GM12878 (cell line): ENCODE measurements at regions of chr12 and their contacts with region 1.

Region 1: DNA sequence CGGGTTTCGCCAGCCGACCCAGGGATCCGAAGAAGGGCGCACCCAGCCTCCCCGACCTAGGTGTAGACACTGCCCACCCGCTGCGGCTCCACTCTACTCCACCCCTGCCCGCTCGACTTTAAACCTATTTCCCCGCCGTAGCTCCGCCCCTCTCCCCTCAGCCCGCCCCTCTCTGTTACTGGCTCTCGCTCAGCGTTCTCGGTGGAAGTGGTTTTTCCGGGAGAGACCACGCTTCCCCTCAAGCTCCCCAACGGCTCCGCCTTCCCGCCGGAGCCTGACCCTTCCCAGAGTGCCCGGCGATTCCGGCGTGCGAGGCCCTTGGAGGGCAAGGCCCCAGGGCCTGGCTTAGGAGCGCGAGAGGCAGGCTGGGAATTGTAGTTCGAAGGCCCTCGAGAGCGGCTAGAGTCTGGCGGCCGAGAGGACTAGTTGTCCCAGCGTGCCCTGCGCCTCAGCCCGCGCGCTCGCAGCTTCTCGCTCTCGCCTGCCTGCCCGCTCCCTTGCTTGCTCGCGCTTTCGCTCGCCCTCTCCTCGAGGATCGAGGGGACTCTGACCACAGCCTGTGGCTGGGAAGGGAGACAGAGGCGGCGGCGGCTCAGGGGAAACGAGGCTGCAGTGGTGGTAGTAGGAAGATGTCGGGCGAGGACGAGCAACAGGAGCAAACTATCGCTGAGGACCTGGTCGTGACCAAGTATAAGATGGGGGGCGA is at the start of gene PA2G4:
- DNase-seq: peak; percentile 97
- ATAC-seq: peak; percentile 97
- H3K4me3 ChIP-seq: peak within 1 kb of the TSS; percentile 97
- H3K27ac ChIP-seq: peak within 1 kb of the TSS; percentile 86
- H3K4me1 ChIP-seq: peaks cover 3% of the 10 kb centered on the region; the same call in 1 of the 2 replicates
- H3K27me3 ChIP-seq: no peaks in the 10 kb centered on the region; a peak in 1 of 4 replicates
- CTCF ChIP-seq: no peak
- EP300 ChIP-seq: peak in 1 of 2 experiments; percentile 47; a peak in 2 of 4 replicates
- POLR2A ChIP-seq: peak; percentile 93
- RAD21 ChIP-seq: no peak
- polyA plus RNA-seq, gene PA2G4: 148 to 215 TPM

Region 2: DNA sequence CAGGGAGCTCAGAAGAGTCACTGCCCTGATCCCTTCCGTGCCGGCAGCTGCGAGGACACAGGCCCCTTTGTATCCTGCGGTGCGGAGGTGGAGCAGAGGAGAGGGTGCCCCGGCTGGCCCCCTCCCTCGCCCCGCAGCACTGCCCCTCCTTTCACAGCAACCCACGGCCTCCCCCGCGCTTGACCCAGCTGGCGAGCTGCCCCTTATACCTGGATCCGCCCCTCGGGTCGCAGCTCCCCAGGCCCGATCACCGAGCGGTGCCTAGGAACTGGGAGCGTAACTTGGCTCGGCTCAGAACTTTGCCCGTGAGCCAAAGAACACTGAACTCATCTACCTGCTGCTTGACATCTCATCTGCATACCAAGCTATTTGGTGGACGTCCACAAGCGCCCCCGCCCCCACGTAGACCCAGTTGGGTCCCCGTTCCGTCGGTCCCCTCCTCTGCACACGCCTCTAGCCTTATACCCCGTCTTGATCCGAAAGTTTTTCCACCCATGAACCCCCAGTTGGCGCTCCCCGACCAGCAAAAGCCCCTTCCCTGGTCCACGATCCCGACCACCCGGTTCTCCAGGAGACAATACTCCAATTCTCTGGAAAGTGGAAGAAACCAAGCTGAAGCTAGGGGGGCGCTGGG is 274.2 kb before region 1 on chr12:
- CTCF ChIA-PET with region 1: no interaction called
- POLR2A ChIA-PET with region 1: interaction called, 3 read pairs
- RAD21 ChIA-PET with region 1: interaction called, 4 read pairs
- SMC1A ChIA-PET with region 1: interaction called, 3 read pairs
- in situ Hi-C with region 1: no loop called
- intact Hi-C with region 1: loop called (anchors 5 kb)
- DNase-seq: no peak
- ATAC-seq: peak; percentile 25
- H3K4me3 ChIP-seq: peak overlapping the region; percentile 96
- H3K27ac ChIP-seq: peak overlapping the region; percentile 76
- H3K4me1 ChIP-seq: peaks cover 21% of the 10 kb centered on the region; the same call in 1 of the 2 replicates
- H3K27me3 ChIP-seq: no peaks in the 10 kb centered on the region
- CTCF ChIP-seq: no peak
- EP300 ChIP-seq: no peak
- POLR2A ChIP-seq: 0 out of 2 replicates have a peak, but pooled peaks have one; percentile 20
- RAD21 ChIP-seq: 0 out of 2 replicates have a peak, but pooled peaks have one; percentile 13

Region 3: DNA sequence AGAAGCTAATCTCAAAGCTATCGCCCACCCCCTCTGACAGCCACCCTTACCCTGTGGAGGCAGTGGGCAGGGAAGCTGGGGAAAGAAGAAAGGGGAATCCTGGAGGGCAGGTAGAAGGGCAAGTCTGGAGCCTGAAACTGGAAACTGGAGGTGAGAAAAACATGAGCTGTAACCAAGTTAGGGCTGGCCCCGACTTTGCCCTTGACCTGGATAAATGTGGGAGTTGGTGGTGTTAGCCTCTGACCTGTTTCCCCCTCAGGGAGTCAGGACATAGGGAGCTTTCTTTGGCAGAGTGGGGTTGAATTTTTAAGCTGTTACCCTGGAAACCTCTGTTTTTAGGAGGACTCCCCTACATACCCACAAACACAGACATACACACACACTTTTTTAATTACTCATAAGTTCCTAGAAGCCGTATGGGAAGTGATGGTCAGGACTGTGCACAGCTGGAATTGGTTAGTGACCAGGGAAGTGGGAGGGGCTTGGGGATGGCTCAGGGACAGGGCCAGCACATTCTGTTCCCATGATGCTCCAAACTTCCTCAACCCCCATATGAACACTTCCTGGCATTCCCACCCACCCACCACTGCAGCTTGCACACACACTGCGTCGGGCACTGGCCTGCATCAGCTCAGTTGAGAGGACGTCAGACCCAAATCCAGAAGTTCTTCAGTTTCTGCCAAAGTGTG is 256.5 kb before region 1 on chr12:
- CTCF ChIA-PET with region 1: no interaction called
- POLR2A ChIA-PET with region 1: no interaction called
- RAD21 ChIA-PET with region 1: no interaction called
- SMC1A ChIA-PET with region 1: no interaction called
- in situ Hi-C with region 1: no loop called
- intact Hi-C with region 1: no loop called
- DNase-seq: no peak
- ATAC-seq: peak; percentile 36
- H3K4me3 ChIP-seq: no peak overlapping the region
- H3K27ac ChIP-seq: no peak overlapping the region
- H3K4me1 ChIP-seq: no peaks in the 10 kb centered on the region; the same call in 1 of the 2 replicates
- H3K27me3 ChIP-seq: peaks cover 0 to 1% of the 10 kb centered on the region in 2 experiments; a peak in 3 of 4 replicates
- CTCF ChIP-seq: no peak
- EP300 ChIP-seq: no peak
- POLR2A ChIP-seq: no peak
- RAD21 ChIP-seq: no peak

Region 4: DNA sequence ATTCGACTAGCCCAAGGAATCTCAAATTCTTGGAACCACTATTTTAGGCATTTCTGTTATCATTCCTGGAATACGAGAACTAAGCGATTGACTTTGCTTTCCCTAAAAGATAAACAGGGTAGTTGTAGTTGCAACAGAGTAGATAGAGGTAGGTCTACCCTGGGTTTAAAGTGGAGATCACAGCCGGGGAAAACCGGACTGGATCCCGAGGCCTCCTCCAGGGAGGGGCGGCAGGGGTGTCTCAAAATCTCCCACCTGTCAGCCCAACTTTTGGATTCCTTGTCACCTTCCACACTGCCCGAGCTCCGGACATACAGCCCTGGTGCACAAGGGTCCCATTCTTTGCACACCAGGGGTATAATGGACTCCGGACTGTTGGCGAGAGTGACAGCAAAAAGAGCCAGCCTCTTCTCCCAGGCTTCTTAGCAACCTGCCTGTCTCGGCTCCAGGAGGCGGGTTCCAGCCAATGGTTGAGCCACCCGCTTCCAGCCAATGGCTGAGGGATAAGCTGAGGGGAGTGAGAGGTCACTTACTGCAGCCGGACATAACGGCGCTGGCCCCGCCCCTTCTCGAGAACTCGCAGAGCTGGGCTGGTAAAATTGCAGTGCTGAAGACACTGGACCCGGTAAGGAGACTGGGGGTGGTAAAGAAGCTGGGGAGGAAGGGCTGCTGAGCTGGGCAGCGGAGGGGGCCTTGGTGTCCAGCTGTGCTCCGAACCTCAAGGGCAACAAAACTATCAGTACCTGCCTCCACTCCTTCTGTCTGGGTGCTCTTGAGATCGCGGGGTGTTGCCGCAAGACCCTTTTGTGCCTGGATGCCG is 107.3 kb before region 1 on chr12 and contains the start of gene SUOX:
- CTCF ChIA-PET with region 1: interaction called, 15 read pairs
- POLR2A ChIA-PET with region 1: no interaction called
- RAD21 ChIA-PET with region 1: interaction called, 14 read pairs
- SMC1A ChIA-PET with region 1: interaction called, 3 read pairs
- in situ Hi-C with region 1: no loop called
- intact Hi-C with region 1: no loop called
- DNase-seq: peak; percentile 83
- ATAC-seq: peak; percentile 100
- H3K4me3 ChIP-seq: peak within 1 kb of the TSS; percentile 74
- H3K27ac ChIP-seq: peak within 1 kb of the TSS; percentile 33; the same call in 1 of the 2 replicates
- H3K4me1 ChIP-seq: peaks cover 3% of the 10 kb centered on the region; the same call in 1 of the 2 replicates
- H3K27me3 ChIP-seq: no peaks in the 10 kb centered on the region
- CTCF ChIP-seq: no peak
- EP300 ChIP-seq: no peak
- POLR2A ChIP-seq: peak; percentile 72
- RAD21 ChIP-seq: no peak
- polyA plus RNA-seq, gene SUOX: 5.1 to 5.2 TPM

Region 5: DNA sequence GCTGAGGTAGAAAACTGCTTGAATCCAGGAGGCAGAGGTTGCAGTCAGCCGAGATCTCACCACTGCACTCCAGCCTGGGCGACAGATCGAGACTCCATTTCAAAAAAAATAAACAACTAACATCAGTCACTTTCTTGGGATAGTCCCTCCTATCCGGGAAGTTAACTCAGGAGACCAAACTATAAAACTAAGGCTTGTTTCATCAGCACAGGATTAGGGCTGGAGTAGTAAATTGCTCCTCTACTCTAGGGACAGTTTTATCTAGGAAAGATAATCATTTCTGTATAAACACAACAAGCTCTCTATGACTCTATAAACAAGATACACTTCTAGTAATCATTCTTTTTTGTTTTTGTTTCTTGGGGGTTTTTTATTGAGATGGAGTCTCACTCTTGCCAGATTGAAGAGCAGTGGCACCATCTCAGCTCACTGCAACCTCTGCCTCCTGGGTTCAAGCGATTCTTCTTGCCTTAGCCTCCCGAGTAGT is 50.8 kb before region 1 on chr12:
- CTCF ChIA-PET with region 1: no interaction called
- POLR2A ChIA-PET with region 1: interaction called, 4 read pairs
- RAD21 ChIA-PET with region 1: no interaction called
- SMC1A ChIA-PET with region 1: interaction called, 3 read pairs
- in situ Hi-C with region 1: loop called (anchors 5 kb)
- intact Hi-C with region 1: loop called (anchors 2 kb)
- DNase-seq: no peak
- ATAC-seq: no peak
- H3K4me3 ChIP-seq: no peak overlapping the region
- H3K27ac ChIP-seq: no peak overlapping the region
- H3K4me1 ChIP-seq: no peaks in the 10 kb centered on the region
- H3K27me3 ChIP-seq: no peaks in the 10 kb centered on the region
- CTCF ChIP-seq: no peak
- EP300 ChIP-seq: no peak
- POLR2A ChIP-seq: no peak
- RAD21 ChIP-seq: no peak

Region 6: GRCh38 chr12:56084958-56085543 is 19.2 kb before region 1 on chr12:
- CTCF ChIA-PET with region 1: interaction called, 8 read pairs
- POLR2A ChIA-PET with region 1: interaction called, 3 read pairs
- RAD21 ChIA-PET with region 1: no interaction called
- SMC1A ChIA-PET with region 1: no interaction called
- in situ Hi-C with region 1: no loop called
- intact Hi-C with region 1: loop called (anchors 2 kb)
- DNase-seq: no peak
- ATAC-seq: peak; percentile 57
- H3K4me3 ChIP-seq: no peak overlapping the region
- H3K27ac ChIP-seq: no peak overlapping the region
- H3K4me1 ChIP-seq: no peaks in the 10 kb centered on the region
- H3K27me3 ChIP-seq: peaks cover 9 to 11% of the 10 kb centered on the region in 2 experiments; a peak in 3 of 4 replicates
- CTCF ChIP-seq: peak; percentile 32 to 58 (median 43)
- EP300 ChIP-seq: no peak
- POLR2A ChIP-seq: no peak
- RAD21 ChIP-seq: 0 out of 2 replicates have a peak, but pooled peaks have one; percentile 19